Panc1 (cell line): ENCODE measurements at regions of chr13 and their contacts with region 1.

Region 1: DNA sequence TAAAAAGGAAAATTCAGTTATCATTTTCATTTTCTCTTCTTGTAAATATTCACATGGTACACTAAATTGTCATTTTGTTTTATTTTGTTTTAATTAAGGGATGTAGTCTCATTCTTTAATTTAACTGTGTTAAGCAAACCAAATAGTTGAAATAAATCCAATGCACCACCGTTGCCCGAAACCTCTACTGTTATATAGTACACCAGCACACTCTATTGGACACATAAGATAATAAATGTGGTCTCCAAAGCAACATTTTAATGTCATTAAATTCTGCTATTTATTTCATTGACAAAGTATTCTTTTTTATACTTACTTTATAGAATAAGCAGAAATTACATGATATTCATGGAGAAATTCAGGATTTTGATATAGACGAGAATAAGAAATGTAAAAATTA is 156.4 kb upstream of the FREM2 start:
- DNase-seq: no peak
- ATAC-seq: no peak
- H3K4me3 ChIP-seq: no peak overlapping the region
- H3K27ac ChIP-seq: no peak overlapping the region
- H3K4me1 ChIP-seq: no peaks in the 10 kb centered on the region
- H3K27me3 ChIP-seq: no peaks in the 10 kb centered on the region
- CTCF ChIP-seq: peak; percentile 19; the same call in 1 of the 2 replicates

Region 2: DNA sequence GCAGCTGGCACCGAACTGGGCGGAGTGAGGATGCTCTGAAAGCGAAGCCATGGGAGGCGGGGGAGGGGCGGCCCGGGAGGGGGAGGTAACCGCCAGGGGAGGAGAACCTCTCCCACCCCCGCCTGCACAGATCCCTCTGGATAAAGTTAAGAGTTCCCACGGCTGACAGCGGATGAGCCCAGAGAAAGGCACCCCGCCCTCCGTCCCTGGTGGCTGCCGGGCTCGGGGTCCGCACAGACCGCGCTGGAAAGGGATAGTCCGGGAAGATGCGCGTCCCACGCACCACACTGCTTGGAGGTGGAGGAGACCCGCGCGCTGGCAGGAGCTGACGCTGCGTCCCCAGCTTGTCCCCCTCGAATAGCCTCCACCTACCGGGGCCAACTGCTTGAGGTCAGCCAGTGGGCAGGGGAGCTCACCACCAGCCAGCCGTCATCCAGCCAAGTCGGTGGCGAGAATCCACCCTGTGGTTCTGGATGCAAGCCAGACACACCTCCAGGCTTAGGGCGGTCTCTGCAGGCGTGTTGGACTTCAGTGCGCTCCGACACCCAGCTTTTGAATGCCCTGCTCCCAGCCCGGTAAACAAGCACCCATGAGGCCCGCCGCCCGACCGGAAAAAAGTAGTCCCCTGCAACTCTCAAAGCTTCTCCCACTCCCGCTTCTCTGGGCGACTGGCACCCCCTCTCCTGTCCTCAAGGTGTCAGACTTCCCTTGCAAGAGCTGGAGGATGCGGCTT is 660.6 kb before region 1 on chr13 and contains the start of gene TRPC4:
- CTCF ChIA-PET with region 1: no interaction called
- POLR2A ChIA-PET with region 1: no interaction called
- in situ Hi-C with region 1: no loop called
- intact Hi-C with region 1: loop called (anchors 10 kb)
- DNase-seq: no peak
- ATAC-seq: peak; percentile 86
- H3K4me3 ChIP-seq: peak within 1 kb of the TSS; percentile 27 to 53
- H3K27ac ChIP-seq: no peak within 1 kb of the TSS
- H3K4me1 ChIP-seq: no peaks in the 10 kb centered on the region
- H3K27me3 ChIP-seq: no peaks in the 10 kb centered on the region
- CTCF ChIP-seq: peak; percentile 53
- total RNA-seq, gene TRPC4: 0.10 TPM

Region 3: GRCh38 chr13:38321654-38322053 is 208.8 kb before region 1 on chr13:
- CTCF ChIA-PET with region 1: no interaction called
- POLR2A ChIA-PET with region 1: no interaction called
- in situ Hi-C with region 1: no loop called
- intact Hi-C with region 1: no loop called
- DNase-seq: no peak
- ATAC-seq: no peak
- H3K4me3 ChIP-seq: no peak overlapping the region
- H3K27ac ChIP-seq: no peak overlapping the region
- H3K4me1 ChIP-seq: no peaks in the 10 kb centered on the region
- H3K27me3 ChIP-seq: no peaks in the 10 kb centered on the region
- CTCF ChIP-seq: no peak

Region 4: GRCh38 chr13:38376546-38376945 is 153.9 kb before region 1 on chr13:
- CTCF ChIA-PET with region 1: no interaction called
- POLR2A ChIA-PET with region 1: no interaction called
- in situ Hi-C with region 1: no loop called
- intact Hi-C with region 1: loop called (anchors 10 kb)
- DNase-seq: no peak
- ATAC-seq: no peak
- H3K4me3 ChIP-seq: no peak overlapping the region
- H3K27ac ChIP-seq: no peak overlapping the region
- H3K4me1 ChIP-seq: no peaks in the 10 kb centered on the region
- H3K27me3 ChIP-seq: no peaks in the 10 kb centered on the region
- CTCF ChIP-seq: no peak

Region 5: GRCh38 chr13:38430796-38431195 is 99.7 kb before region 1 on chr13:
- CTCF ChIA-PET with region 1: no interaction called
- POLR2A ChIA-PET with region 1: no interaction called
- in situ Hi-C with region 1: no loop called
- intact Hi-C with region 1: no loop called
- DNase-seq: no peak
- ATAC-seq: no peak
- H3K4me3 ChIP-seq: no peak overlapping the region
- H3K27ac ChIP-seq: no peak overlapping the region
- H3K4me1 ChIP-seq: no peaks in the 10 kb centered on the region
- H3K27me3 ChIP-seq: no peaks in the 10 kb centered on the region
- CTCF ChIP-seq: no peak

Region 6: GRCh38 chr13:38697628-38698333 is 167.3 kb after region 1 on chr13:
- CTCF ChIA-PET with region 1: no interaction called
- POLR2A ChIA-PET with region 1: no interaction called
- in situ Hi-C with region 1: no loop called
- intact Hi-C with region 1: no loop called
- DNase-seq: no peak
- ATAC-seq: no peak
- H3K4me3 ChIP-seq: no peak overlapping the region
- H3K27ac ChIP-seq: no peak overlapping the region
- H3K4me1 ChIP-seq: no peaks in the 10 kb centered on the region
- H3K27me3 ChIP-seq: no peaks in the 10 kb centered on the region
- CTCF ChIP-seq: no peak